K562 (cell line): ENCODE measurements at regions of chr6 and their contacts with region 1.

Region 1: DNA sequence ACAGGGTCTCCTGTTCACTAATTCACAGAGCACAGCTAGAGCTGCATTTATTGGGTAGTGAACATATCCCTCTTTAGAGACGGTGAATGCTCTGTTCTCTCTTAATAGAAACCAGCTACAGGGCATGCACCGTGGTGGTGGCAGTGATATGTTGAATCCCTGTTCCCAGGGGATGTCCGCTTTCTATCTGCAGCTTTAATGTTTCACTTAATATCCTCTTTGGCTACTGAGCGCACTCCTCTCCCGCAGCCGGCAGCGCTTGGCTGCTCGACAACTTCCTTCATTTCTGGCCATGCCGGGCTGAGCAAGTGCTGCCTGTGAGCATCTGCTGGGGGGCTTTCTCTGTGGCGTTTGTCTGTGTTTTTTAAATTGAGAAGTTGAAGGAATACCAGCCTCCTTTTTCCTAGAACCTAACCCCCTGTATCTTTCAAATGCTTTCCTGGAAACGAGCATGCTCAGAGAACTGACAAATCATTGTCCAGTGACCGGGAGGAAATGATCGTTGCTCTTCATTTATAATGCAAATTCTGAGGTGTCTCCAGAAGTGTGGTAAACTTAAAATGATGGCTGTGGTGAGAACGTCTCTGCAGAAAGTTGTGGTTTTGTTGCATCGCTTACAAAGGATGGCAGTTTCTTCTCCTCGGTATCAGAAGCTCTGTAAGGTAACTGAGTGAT is 297.9 kb downstream of the UTRN start:
- DNase-seq: peak in 2 of 4 experiments; percentile 30 to 61
- ATAC-seq: peak; percentile 78
- H3K4me3 ChIP-seq: peak overlapping the region; percentile 33
- H3K27ac ChIP-seq: peak overlapping the region; percentile 38; the same call in 1 of the 3 replicates
- H3K4me1 ChIP-seq: peaks cover 0 to 8% of the 10 kb centered on the region in 2 experiments; a peak in 2 of 5 replicates
- H3K27me3 ChIP-seq: no peaks in the 10 kb centered on the region
- CTCF ChIP-seq: no peak
- EP300 ChIP-seq: no peak
- POLR2A ChIP-seq: no peak
- RAD21 ChIP-seq: no peak

Region 2: GRCh38 chr6:143575440-143575839 is 1007.6 kb before region 1 on chr6:
- CTCF ChIA-PET with region 1: no interaction called
- POLR2A ChIA-PET with region 1: no interaction called
- in situ Hi-C with region 1: no loop called
- intact Hi-C with region 1: loop called (anchors 5 kb)
- DNase-seq: peak; percentile 79 to 85 (median 84)
- ATAC-seq: peak; percentile 95
- H3K4me3 ChIP-seq: no peak overlapping the region
- H3K27ac ChIP-seq: no peak overlapping the region
- H3K4me1 ChIP-seq: no peaks in the 10 kb centered on the region
- H3K27me3 ChIP-seq: peaks cover 0 to 3% of the 10 kb centered on the region in 2 experiments; a peak in 1 of 5 replicates
- CTCF ChIP-seq: peak; percentile 86 to 97 (median 94)
- EP300 ChIP-seq: no peak
- POLR2A ChIP-seq: no peak
- RAD21 ChIP-seq: peak; percentile 99

Region 3: DNA sequence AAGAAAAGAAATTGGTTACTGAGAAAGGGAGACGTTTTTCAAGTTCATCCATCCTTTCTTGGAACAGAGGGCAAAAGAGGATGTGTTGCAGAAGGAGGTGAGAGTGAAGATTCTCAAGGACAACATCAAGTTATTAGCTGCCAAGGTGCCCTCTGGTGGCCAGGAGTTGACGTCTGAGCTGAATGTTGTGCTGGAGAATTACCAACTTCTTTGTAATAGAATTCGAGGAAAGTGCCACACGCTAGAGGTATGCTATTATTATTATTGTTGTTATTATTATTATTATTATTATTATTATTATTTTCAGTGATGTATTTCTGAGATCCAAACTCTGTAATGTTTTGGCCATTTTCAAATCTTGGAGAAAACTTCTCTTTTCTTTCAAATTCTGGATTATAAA is 100.9 kb before region 1 on chr6:
- CTCF ChIA-PET with region 1: no interaction called
- POLR2A ChIA-PET with region 1: no interaction called
- in situ Hi-C with region 1: no loop called
- intact Hi-C with region 1: loop called (anchors 5 kb)
- DNase-seq: peak; percentile 25 to 78 (median 40)
- ATAC-seq: peak; percentile 85
- H3K4me3 ChIP-seq: no peak overlapping the region
- H3K27ac ChIP-seq: no peak overlapping the region
- H3K4me1 ChIP-seq: no peaks in the 10 kb centered on the region
- H3K27me3 ChIP-seq: no peaks in the 10 kb centered on the region
- CTCF ChIP-seq: peak; percentile 61 to 73 (median 68)
- EP300 ChIP-seq: no peak
- POLR2A ChIP-seq: no peak
- RAD21 ChIP-seq: peak; percentile 78 to 80

Region 4: DNA sequence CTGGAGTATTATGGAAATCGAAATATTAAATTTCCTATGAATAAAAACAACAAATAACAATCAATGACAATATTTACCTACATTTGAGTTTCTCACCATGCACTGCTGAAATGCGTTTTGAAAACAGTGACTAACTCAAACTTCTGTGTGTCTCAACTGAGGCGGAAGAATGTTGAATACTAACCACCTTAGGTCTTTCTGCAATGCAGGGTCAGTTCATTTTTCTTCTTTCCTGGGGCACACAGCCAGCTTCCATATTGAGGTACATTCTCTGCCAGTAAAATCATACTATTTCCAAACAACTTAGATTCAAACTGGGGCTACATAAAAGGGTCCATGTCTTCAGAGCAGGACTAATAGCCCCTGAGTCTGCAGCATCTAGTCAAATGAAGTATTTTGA is 12.2 kb after region 1 on chr6:
- CTCF ChIA-PET with region 1: no interaction called
- POLR2A ChIA-PET with region 1: no interaction called
- in situ Hi-C with region 1: no loop called
- intact Hi-C with region 1: no loop called
- DNase-seq: no peak
- ATAC-seq: no peak
- H3K4me3 ChIP-seq: no peak overlapping the region
- H3K27ac ChIP-seq: no peak overlapping the region
- H3K4me1 ChIP-seq: no peaks in the 10 kb centered on the region; a peak in 1 of 5 replicates
- H3K27me3 ChIP-seq: no peaks in the 10 kb centered on the region
- CTCF ChIP-seq: no peak
- EP300 ChIP-seq: no peak
- POLR2A ChIP-seq: no peak
- RAD21 ChIP-seq: no peak

Region 5: GRCh38 chr6:144886682-144887081 is 303.6 kb after region 1 on chr6:
- CTCF ChIA-PET with region 1: no interaction called
- POLR2A ChIA-PET with region 1: no interaction called
- in situ Hi-C with region 1: no loop called
- intact Hi-C with region 1: loop called (anchors 2 kb)
- DNase-seq: peak; percentile 65 to 92 (median 78)
- ATAC-seq: peak; percentile 94
- H3K4me3 ChIP-seq: no peak overlapping the region
- H3K27ac ChIP-seq: no peak overlapping the region
- H3K4me1 ChIP-seq: peaks cover 5 to 14% of the 10 kb centered on the region in 2 experiments; a peak in 2 of 5 replicates
- H3K27me3 ChIP-seq: no peaks in the 10 kb centered on the region; a peak in 1 of 5 replicates
- CTCF ChIP-seq: peak in 1 of 3 experiments; percentile 2; a peak in 1 of 6 replicates
- EP300 ChIP-seq: peak; percentile 99
- POLR2A ChIP-seq: no peak
- RAD21 ChIP-seq: 0 out of 4 replicates have a peak, but pooled peaks of 1 of the 2 experiments have one; percentile 7

Region 6: DNA sequence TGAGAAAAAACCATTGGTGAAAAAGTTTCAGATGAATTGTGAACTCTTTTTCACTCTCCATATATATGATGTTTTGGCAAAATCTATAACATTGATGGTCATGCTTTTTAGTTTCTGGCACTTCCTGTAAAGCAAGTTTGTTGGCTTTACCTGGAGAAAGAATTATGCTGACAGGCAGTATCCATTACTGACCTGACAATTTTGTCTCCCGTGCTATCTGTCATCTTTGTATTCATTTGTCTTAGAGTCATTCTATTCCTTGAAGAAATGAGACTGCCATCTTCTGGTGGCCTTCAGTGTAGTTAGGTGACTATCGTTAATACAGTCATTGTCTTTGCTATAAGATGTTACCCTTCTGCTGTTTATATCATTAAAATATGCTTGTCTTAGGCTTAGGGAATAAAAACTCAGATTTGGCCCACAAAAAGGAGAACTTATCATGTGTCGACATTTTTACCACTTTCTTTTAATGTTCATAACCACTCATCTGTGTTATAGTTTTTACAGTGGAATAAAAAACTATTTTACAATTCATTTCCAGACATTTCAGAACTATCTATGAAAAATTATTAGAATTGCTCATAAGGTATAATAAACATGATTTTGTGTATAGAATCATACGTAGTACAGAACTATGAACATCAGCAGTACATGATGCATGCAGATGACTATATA is 445.2 kb after region 1 on chr6:
- CTCF ChIA-PET with region 1: interaction called, 23 read pairs
- POLR2A ChIA-PET with region 1: no interaction called
- in situ Hi-C with region 1: no loop called
- intact Hi-C with region 1: loop called (anchors 1 kb)
- DNase-seq: peak in 2 of 4 experiments; percentile 21 to 59
- ATAC-seq: peak; percentile 82
- H3K4me3 ChIP-seq: no peak overlapping the region
- H3K27ac ChIP-seq: no peak overlapping the region
- H3K4me1 ChIP-seq: no peaks in the 10 kb centered on the region
- H3K27me3 ChIP-seq: no peaks in the 10 kb centered on the region
- CTCF ChIP-seq: peak in 2 of 3 experiments; percentile 37 to 56; a peak in 3 of 6 replicates
- EP300 ChIP-seq: no peak
- POLR2A ChIP-seq: no peak
- RAD21 ChIP-seq: peak; percentile 83 to 85

Region 7: GRCh38 chr6:145633981-145634627 is 1051.0 kb after region 1 on chr6:
- CTCF ChIA-PET with region 1: interaction called, 5 read pairs
- POLR2A ChIA-PET with region 1: no interaction called
- in situ Hi-C with region 1: loop called (anchors 25 kb)
- intact Hi-C with region 1: loop called (anchors 1 kb)
- DNase-seq: peak; percentile 76 to 88 (median 82)
- ATAC-seq: peak; percentile 99
- H3K4me3 ChIP-seq: no peak overlapping the region
- H3K27ac ChIP-seq: no peak overlapping the region
- H3K4me1 ChIP-seq: no peaks in the 10 kb centered on the region
- H3K27me3 ChIP-seq: no peaks in the 10 kb centered on the region; a peak in 1 of 5 replicates
- CTCF ChIP-seq: peak; percentile 83 to 90 (median 85)
- EP300 ChIP-seq: no peak
- POLR2A ChIP-seq: no peak
- RAD21 ChIP-seq: peak; percentile 61 to 81